Panc1 (cell line): ENCODE measurements at regions of chr4 and their contacts with region 1.

Region 1: GRCh38 chr4:80322716-80323115 is 12.8 kb upstream of the CFAP299 start:
- DNase-seq: no peak
- ATAC-seq: 0 out of 2 replicates have a peak, but pooled peaks have one; percentile 60
- H3K4me3 ChIP-seq: no peak overlapping the region
- H3K27ac ChIP-seq: no peak overlapping the region
- H3K4me1 ChIP-seq: no peaks in the 10 kb centered on the region
- H3K27me3 ChIP-seq: no peaks in the 10 kb centered on the region
- CTCF ChIP-seq: peak; percentile 28

Region 2: DNA sequence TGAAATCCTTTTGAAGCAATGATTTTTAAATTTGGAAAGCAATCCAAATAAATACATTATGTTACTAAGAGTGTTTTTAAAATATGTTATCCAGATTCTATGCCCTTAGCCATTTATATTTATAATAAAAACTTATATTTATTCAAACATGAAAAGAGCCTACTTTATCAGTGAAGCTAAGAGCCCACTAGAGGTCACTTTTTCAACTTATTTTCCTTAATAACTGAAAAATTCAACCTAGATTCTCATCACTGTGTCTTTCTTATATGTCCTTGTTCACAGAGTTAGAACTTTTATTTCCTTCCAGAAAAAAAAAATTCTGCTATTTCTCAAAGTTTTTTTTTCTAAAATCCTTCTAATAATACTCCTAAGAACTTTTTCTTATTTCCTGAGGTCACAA is 101.6 kb before region 1 on chr4:
- CTCF ChIA-PET with region 1: interaction called, 4 read pairs
- POLR2A ChIA-PET with region 1: no interaction called
- in situ Hi-C with region 1: no loop called
- intact Hi-C with region 1: loop called (anchors 5 kb)
- DNase-seq: no peak
- ATAC-seq: no peak
- H3K4me3 ChIP-seq: no peak overlapping the region
- H3K27ac ChIP-seq: no peak overlapping the region
- H3K4me1 ChIP-seq: no peaks in the 10 kb centered on the region
- H3K27me3 ChIP-seq: no peaks in the 10 kb centered on the region
- CTCF ChIP-seq: peak; percentile 38; the same call in 1 of the 2 replicates